Head of caudate nucleus (tissue), 42 donors: ENCODE measurements at regions of chr5 and their contacts with region 1.

Region 1: DNA sequence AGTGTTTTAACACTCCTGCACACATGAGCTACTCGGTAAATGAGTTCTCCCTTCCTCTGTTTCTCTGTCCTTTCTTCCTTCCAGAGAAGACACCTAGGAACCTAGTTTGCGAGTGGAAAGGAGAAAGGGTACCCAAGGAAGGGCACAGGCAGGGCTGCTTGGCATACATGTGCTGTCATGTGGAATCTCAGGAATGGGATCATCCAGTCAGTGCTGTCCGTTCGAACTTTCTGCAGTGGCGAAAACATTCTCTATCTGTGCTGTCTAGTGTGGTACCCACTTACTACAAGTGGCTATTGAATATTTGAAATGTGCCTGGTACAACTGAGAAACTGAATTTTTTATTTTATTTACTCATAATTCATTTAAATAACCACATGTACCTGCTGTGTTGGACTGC is 28.0 kb downstream of the NLN start:
- DNase-seq: no peak

Region 2: DNA sequence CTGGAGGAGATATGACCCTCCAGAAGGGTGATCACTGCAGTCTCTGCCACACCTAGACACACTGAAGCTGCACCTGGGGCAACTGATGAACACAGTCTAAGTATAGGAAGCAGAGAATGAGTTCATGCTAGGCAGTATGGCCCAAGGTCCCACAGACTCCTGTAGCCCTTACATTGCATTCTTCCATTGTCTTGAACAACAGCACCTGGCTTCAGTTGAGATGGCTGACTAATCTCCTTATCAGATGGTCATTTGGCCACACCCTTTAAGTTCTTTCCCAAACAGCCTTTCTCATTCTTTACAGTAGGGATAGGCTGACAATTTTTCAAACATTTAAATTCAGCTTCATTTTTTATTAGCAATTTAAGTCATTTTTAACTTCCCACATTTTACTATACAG is 210.1 kb before region 1 on chr5:
- intact Hi-C with region 1: no loop called
- DNase-seq: no peak

Region 3: GRCh38 chr5:65630981-65631380 is 119.0 kb before region 1 on chr5:
- intact Hi-C with region 1: no loop called
- DNase-seq: no peak

Region 4: DNA sequence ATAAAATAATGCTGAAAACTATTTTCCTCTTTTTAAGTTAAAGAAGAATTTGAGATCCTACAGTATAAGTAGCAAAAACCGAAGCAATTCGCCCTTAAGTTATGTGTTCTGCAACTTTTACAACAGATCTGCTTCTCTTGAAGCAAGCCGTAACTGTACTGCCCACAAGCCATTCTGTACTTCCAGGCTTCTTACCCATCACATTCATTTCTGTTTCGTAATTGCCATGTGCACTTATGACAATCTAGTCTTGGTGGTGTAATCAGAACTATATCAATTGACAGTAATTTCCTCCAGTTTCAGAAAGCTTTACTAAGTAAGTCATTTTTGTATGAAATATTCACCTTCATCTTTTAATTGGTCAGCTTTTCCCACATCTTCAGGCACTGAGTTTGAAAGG is 41.8 kb before region 1 on chr5:
- intact Hi-C with region 1: no loop called
- DNase-seq: no peak

Region 5: GRCh38 chr5:66144074-66144833 is 394.3 kb after region 1 on chr5 and contains the start of gene SREK1:
- intact Hi-C with region 1: loop called (anchors 10 kb)
- DNase-seq: peak; percentile 85 to 97 (median 93)

Region 6: GRCh38 chr5:66180282-66181155 is 430.6 kb after region 1 on chr5:
- intact Hi-C with region 1: no loop called
- DNase-seq: no peak